ENCODE measurements at regions of chr1 and their contacts with region 1.

Region 1: GRCh38 chr1:77524038-77524437 is 158.4 kb downstream of the ZZZ3 start:
- DNase-seq: no peak
- H3K4me3 ChIP-seq: no peak overlapping the region
- H3K27ac ChIP-seq: no peak overlapping the region
- H3K4me1 ChIP-seq: no peaks in the 10 kb centered on the region
- H3K27me3 ChIP-seq: no peaks in the 10 kb centered on the region
- CTCF ChIP-seq: no peak

Region 2: DNA sequence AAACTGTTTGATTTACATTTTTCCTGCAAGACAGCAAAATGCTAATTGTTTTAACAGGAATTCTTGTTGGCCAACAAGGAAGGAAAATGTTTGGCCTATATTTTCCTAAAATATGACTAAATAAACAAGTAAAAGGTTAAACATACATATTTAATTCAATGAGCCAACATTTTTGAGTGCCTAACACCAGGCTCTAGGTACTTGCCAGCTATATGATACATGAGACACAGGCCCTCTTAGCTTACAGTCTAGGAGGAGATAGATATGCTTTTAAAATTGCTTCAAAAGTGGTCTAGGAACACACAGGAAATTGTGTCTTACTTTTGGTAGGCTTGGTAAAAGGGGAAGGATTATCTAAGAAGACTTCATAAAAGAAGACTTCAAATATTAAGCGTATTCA is 355.7 kb before region 1 on chr1:
- intact Hi-C with region 1: loop called (anchors 5 kb)
- DNase-seq: no peak
- H3K4me3 ChIP-seq: no peak overlapping the region
- H3K27ac ChIP-seq: no peak overlapping the region
- H3K4me1 ChIP-seq: peaks cover 9% of the 10 kb centered on the region
- H3K27me3 ChIP-seq: no peaks in the 10 kb centered on the region
- CTCF ChIP-seq: no peak

Measured in left ventricle myocardium inferior (tissue), 1 donor.